ENCODE measurements at regions of chrX and their contacts with region 1.

Region 1: GRCh38 chrX:101617211-101618191 is at the start of gene ARMCX6:
- DNase-seq: peak; percentile 59 to 67
- H3K4me3 ChIP-seq: peak within 1 kb of the TSS; percentile 68
- H3K4me3 Mint-ChIP-seq: peak within 1 kb of the TSS; percentile 89
- H3K27ac Mint-ChIP-seq: peak within 1 kb of the TSS; percentile 76
- H3K4me1 ChIP-seq: no peaks in the 10 kb centered on the region
- H3K4me1 Mint-ChIP-seq: no peaks in the 10 kb centered on the region
- H3K27me3 ChIP-seq: no peaks in the 10 kb centered on the region
- H3K27me3 Mint-ChIP-seq: no peaks in the 10 kb centered on the region
- CTCF ChIP-seq: peak in 1 of 2 experiments; percentile 60
- total RNA-seq, gene ARMCX6: 25.8 and 27.4 TPM in 2 replicates

Region 2: DNA sequence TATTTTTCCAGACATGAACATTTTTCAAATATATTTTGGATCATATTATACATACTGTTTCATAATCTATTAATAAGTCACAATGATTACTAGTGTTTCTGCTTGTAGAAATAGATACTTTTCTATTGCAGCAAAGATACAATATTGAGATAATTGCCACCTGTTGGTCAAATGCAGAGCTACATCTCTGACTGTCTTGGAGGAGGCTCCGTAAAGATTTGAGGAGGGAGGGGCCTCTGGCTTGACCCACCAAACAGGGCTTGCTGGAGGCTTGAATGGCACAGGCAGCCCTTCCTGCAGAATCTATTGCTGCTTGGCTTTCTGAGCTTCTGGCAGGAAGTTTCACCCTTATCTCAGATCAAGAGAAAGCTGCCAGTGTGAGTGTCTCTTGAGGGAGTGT is 141.5 kb after region 1 on chrX:
- CTCF ChIA-PET with region 1: no interaction called
- POLR2A ChIA-PET with region 1: no interaction called
- intact Hi-C with region 1: loop called (anchors 5 kb)
- DNase-seq: peak; percentile 38 to 42
- H3K4me3 ChIP-seq: no peak overlapping the region
- H3K4me3 Mint-ChIP-seq: no peak overlapping the region
- H3K27ac Mint-ChIP-seq: no peak overlapping the region
- H3K4me1 ChIP-seq: no peaks in the 10 kb centered on the region
- H3K4me1 Mint-ChIP-seq: no peaks in the 10 kb centered on the region
- H3K27me3 ChIP-seq: no peaks in the 10 kb centered on the region
- H3K27me3 Mint-ChIP-seq: peaks cover 4% of the 10 kb centered on the region
- CTCF ChIP-seq: peak; percentile 7 to 36

Region 3: GRCh38 chrX:101799387-101799786 is 181.9 kb after region 1 on chrX:
- CTCF ChIA-PET with region 1: no interaction called
- POLR2A ChIA-PET with region 1: no interaction called
- intact Hi-C with region 1: loop called (anchors 5 kb)
- DNase-seq: peak; percentile 77 to 79
- H3K4me3 ChIP-seq: no peak overlapping the region
- H3K4me3 Mint-ChIP-seq: peak overlapping the region; percentile 16
- H3K27ac Mint-ChIP-seq: no peak overlapping the region
- H3K4me1 ChIP-seq: no peaks in the 10 kb centered on the region
- H3K4me1 Mint-ChIP-seq: no peaks in the 10 kb centered on the region
- H3K27me3 ChIP-seq: no peaks in the 10 kb centered on the region
- H3K27me3 Mint-ChIP-seq: no peaks in the 10 kb centered on the region
- CTCF ChIP-seq: peak; percentile 41 to 45